Transverse colon (tissue), 4 donors: ENCODE measurements at regions of chr10 and their contacts with region 1.

Region 1: GRCh38 chr10:62540389-62540788 is 166.2 kb downstream of the ZNF365 start:
- DNase-seq: no peak
- H3K4me3 ChIP-seq: no peak overlapping the region
- H3K27ac ChIP-seq: no peak overlapping the region
- H3K4me1 ChIP-seq: peaks cover 0 to 3% (median 0%) of the 10 kb centered on the region in 4 donors
- H3K27me3 ChIP-seq: no peaks in the 10 kb centered on the region
- CTCF ChIP-seq: no peak
- EP300 ChIP-seq: no peak
- POLR2A ChIP-seq: no peak

Region 2: DNA sequence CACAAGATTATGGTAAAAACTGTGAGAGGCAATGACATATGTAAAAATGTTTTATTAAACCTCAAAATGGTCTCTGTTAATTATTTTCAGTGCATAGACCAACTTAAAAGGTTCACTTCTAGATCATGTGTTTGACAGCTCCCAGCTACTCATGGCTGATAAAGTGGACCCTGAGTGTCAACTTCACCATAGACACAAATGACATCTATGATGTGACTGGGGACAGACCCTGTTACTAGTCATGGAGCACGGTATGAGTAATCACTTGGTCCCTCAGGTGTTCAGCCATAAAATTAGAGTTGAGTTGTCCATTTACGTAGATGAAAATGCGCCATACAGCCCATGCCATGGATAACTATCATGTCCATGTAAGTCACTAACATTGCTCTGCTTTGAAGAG is 33.5 kb after region 1 on chr10:
- in situ Hi-C with region 1: no loop called
- intact Hi-C with region 1: loop called (anchors 2 kb)
- DNase-seq: no peak
- H3K4me3 ChIP-seq: no peak overlapping the region
- H3K27ac ChIP-seq: no peak overlapping the region
- H3K4me1 ChIP-seq: no peaks in the 10 kb centered on the region
- H3K27me3 ChIP-seq: no peaks in the 10 kb centered on the region
- CTCF ChIP-seq: no peak
- EP300 ChIP-seq: no peak
- POLR2A ChIP-seq: no peak

Region 3: DNA sequence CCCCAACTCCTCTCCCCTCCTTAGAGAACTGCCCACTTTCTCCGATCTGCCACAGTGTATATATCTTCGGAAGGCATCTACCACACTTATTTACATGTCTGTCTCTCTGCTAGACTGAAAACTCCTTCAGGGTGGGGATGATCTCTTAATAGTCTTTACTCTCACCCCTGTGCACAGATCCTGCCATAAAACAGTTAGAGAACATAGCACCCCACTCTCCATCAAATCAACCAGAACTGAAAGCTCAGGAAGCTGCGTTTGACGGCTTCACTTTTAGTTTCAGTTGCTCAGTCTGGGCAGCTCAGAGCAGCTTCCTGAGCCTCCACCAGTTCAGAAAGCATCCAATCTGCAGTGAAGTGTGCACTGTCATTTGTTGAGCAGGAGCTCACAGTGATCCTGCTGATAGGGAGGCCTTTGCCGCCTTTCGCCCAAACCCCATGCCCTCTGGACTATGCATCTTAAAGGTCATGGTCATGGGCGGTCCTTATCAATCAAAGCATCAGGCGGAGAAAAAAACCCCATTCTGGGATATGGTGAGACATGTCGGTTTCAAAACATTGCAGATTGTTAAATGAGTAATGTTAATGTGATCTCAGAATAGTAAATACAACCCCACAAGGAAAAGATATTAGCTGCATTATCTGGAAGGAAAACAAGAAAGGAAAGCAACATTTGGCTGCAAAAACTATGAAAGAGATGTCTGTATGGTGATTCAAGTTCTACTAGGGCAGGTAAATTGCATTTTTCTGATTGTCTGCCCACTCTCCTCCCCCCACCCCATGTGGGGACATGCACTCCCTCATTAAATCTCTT is 97.1 kb after region 1 on chr10:
- in situ Hi-C with region 1: no loop called
- intact Hi-C with region 1: no loop called
- DNase-seq: peak; percentile 33
- H3K4me3 ChIP-seq: peak overlapping the region in 1 of 4 donors; percentile 7
- H3K27ac ChIP-seq: peak overlapping the region; percentile 53 to 78 (median 64)
- H3K4me1 ChIP-seq: peaks cover 0 to 16% (median 0%) of the 10 kb centered on the region in 4 donors
- H3K27me3 ChIP-seq: no peaks in the 10 kb centered on the region
- CTCF ChIP-seq: no peak
- EP300 ChIP-seq: no peak
- POLR2A ChIP-seq: no peak